H1 (cell line): ENCODE measurements at regions of chr17 and their contacts with region 1.

Region 1: DNA sequence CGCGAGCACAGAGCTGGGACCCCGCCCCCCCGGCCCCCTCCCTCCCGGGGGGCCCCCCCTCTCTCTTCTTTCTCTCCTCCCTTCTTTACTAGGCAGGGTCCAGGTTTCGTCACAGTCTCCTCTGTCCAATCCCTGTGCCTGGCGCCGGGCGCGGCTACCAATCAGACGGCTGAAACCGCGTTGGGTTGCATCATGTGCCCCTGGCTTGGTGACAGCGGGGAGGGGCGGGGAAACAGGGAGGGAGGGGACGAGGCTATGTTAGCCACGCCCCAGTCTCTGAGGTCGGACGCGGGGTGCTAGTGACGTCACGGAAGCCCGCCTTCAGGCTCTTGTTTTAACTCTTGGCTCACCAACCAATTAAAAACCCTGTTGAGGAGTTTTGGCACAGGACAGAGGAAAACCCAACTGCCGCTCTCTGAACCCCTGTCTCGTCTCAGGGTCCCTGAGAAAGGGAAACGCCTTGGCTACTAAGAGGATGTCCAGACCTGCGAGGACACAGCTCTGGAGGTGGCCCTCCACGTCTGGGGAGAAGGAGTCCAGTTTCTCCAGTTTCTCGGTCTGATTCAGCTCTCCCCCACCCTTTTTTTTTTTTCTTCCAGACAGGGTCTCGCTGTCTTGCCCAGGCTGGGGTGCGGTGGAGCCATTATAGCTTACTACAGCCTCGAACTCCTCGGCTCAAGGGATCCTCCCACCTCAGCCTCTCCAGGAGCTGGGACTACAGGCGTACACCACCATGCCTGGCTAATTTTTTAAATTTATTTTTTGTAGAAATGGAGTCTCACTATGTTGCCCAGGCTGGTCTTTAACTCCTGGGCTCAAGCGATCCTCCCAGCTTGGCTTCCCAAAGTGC is 439 bp upstream of the PLEKHH3 start:
- DNase-seq: peak; percentile 96 to 98
- H3K4me3 ChIP-seq: peak overlapping the region in 3 of 4 experiments; percentile 77 to 82 (median 81); a peak in 7 of 8 replicates
- H3K27ac ChIP-seq: peak overlapping the region; percentile 58
- H3K4me1 ChIP-seq: peaks cover 0 to 50% (median 35%) of the 10 kb centered on the region in 4 experiments; a peak in 6 of 7 replicates
- H3K27me3 ChIP-seq: peaks cover 0 to 40% (median 28%) of the 10 kb centered on the region in 4 experiments; a peak in 6 of 7 replicates
- CTCF ChIP-seq: no peak
- EP300 ChIP-seq: no peak
- POLR2A ChIP-seq: no peak; a peak in 1 of 3 replicates
- RAD21 ChIP-seq: no peak

Region 2: GRCh38 chr17:42554250-42555121 is 122.7 kb before region 1 on chr17:
- CTCF ChIA-PET with region 1: interaction called, 3 read pairs
- POLR2A ChIA-PET with region 1: interaction called, 10 read pairs
- DNase-seq: peak in 1 of 2 experiments; percentile 95
- H3K4me3 ChIP-seq: peak overlapping the region; percentile 61 to 84 (median 71)
- H3K27ac ChIP-seq: peak overlapping the region; percentile 53; the same call in 1 of the 2 replicates
- H3K4me1 ChIP-seq: peaks cover 0 to 9% (median 6%) of the 10 kb centered on the region in 4 experiments; a peak in 6 of 7 replicates
- H3K27me3 ChIP-seq: no peaks in the 10 kb centered on the region; a peak in 1 of 7 replicates
- CTCF ChIP-seq: no peak
- EP300 ChIP-seq: no peak
- POLR2A ChIP-seq: peak in 1 of 2 experiments; percentile 70; a peak in 2 of 3 replicates
- RAD21 ChIP-seq: no peak

Region 3: GRCh38 chr17:42566883-42567573 is 110.2 kb before region 1 on chr17 and contains the start of gene MLX:
- CTCF ChIA-PET with region 1: interaction called, 4 read pairs
- POLR2A ChIA-PET with region 1: interaction called, 18 read pairs
- DNase-seq: peak; percentile 79 to 99
- H3K4me3 ChIP-seq: peak within 1 kb of the TSS; percentile 44 to 81 (median 74)
- H3K27ac ChIP-seq: peak within 1 kb of the TSS; percentile 63
- H3K4me1 ChIP-seq: peaks cover 0 to 21% (median 9%) of the 10 kb centered on the region in 4 experiments; a peak in 5 of 7 replicates
- H3K27me3 ChIP-seq: no peaks in the 10 kb centered on the region
- CTCF ChIP-seq: no peak
- EP300 ChIP-seq: no peak
- POLR2A ChIP-seq: peak in 1 of 2 experiments; percentile 11; a peak in 1 of 3 replicates
- RAD21 ChIP-seq: no peak
- total RNA-seq, gene MLX: 27.5 and 34.2 TPM in 2 replicates

Region 4: GRCh38 chr17:42609182-42609813 is 67.9 kb before region 1 on chr17 and contains the starts of genes RETREG3 and TUBG1:
- CTCF ChIA-PET with region 1: interaction called, 10 read pairs
- POLR2A ChIA-PET with region 1: interaction called, 5 read pairs
- DNase-seq: peak; percentile 97 to 98
- H3K4me3 ChIP-seq: peak within 1 kb of the TSS; percentile 73 to 98 (median 91)
- H3K27ac ChIP-seq: peak within 1 kb of the TSS; percentile 46; the same call in 1 of the 2 replicates
- H3K4me1 ChIP-seq: peaks cover 0 to 4% (median 2%) of the 10 kb centered on the region in 4 experiments; a peak in 6 of 7 replicates
- H3K27me3 ChIP-seq: no peaks in the 10 kb centered on the region
- CTCF ChIP-seq: peak in 1 of 3 experiments; percentile 12; a peak in 1 of 4 replicates
- EP300 ChIP-seq: no peak
- POLR2A ChIP-seq: peak; percentile 66 to 77
- RAD21 ChIP-seq: peak in 1 of 2 experiments; percentile 31; a peak in 2 of 4 replicates
- total RNA-seq, gene RETREG3: 39.6 and 42.6 TPM in 2 replicates
- total RNA-seq, gene TUBG1: 107 and 109 TPM in 2 replicates

Region 5: DNA sequence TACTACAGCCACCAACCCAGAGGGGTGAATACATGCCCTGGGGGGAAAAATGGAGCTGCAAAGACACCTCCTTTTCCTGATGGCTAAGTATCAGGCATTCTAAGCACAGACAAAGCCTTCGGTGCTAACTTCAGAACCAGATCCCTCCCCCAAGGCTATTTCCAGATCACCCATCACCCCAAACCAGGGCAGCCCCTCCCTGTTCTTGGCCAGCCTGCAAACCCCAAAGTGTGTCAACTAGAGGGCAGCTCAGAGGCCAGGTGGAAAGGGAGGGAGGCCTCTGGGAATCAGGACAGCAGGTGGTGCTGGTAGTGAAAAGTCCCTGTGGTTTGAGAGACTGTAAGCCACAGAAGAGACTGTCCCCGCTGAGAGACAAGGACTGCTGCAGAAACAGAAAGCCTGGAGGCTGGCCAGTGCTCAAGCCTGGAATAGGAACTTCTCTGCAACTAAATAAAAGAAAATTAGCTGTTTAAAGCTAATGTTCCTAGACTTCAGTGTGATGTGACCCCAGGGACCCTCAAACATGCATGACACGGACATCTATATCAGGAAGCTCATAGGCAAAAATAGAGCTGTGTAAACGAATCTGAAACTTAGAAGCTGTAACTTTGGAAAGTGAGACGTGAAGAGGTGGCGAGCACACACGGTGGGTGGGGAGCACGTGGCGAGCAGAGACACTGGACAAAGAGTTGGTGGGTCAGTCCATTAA is 58.6 kb before region 1 on chr17:
- CTCF ChIA-PET with region 1: interaction called, 37 read pairs
- POLR2A ChIA-PET with region 1: interaction called, 4 read pairs
- DNase-seq: peak in 1 of 2 experiments; percentile 77
- H3K4me3 ChIP-seq: no peak overlapping the region
- H3K27ac ChIP-seq: no peak overlapping the region
- H3K4me1 ChIP-seq: peaks cover 0 to 4% (median 4%) of the 10 kb centered on the region in 4 experiments; a peak in 3 of 7 replicates
- H3K27me3 ChIP-seq: no peaks in the 10 kb centered on the region
- CTCF ChIP-seq: peak; percentile 54 to 83 (median 79)
- EP300 ChIP-seq: no peak
- POLR2A ChIP-seq: no peak
- RAD21 ChIP-seq: peak; percentile 60 to 71

Region 6: DNA sequence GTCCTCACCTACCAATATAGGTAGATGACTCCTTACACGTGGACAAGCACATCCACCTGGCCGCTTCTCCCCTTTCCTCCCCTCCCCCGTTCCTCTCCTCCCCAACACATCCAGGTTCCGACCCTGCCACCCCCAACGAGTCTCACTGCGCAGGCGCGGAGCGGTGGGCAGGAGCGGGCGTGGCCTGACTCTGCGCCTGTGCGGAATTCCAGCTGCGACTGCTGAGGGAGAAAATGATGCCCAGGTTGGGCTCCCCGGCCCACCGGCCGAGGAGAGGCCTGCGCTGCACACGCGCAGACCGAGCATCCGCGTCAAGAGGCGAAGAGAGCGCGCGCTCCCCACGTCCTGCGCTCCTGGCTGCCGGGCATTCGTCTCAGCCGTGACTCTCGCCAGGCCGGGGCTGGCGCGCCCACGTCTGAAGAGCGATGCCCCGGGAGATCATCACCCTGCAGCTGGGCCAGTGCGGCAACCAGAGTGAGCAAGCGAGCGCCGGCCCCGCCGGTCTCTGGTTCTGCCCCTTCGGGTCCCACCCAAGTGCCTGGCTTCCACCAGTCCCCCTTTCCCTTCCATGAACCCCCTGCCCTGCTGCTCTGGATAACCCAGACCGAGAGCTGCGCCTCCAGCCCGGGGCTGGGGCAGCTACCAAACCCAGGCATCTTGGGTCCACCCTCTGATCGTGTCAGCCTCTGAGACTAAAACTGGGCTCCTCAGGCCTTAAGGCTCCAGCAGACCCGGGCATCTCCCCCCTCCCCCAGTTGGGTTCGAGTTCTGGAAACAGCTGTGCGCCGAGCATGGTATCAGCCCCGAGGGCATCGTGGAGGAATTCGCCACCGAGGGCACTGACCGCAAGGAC is 17.9 kb before region 1 on chr17 and contains the start of gene TUBG2:
- CTCF ChIA-PET with region 1: interaction called, 40 read pairs
- POLR2A ChIA-PET with region 1: interaction called, 239 read pairs
- DNase-seq: peak; percentile 89 to 98
- H3K4me3 ChIP-seq: peak within 1 kb of the TSS; percentile 66 to 84 (median 80)
- H3K27ac ChIP-seq: peak within 1 kb of the TSS; percentile 55; the same call in 1 of the 2 replicates
- H3K4me1 ChIP-seq: peaks cover 3 to 11% (median 6%) of the 10 kb centered on the region in 4 experiments; a peak in 5 of 7 replicates
- H3K27me3 ChIP-seq: no peaks in the 10 kb centered on the region
- CTCF ChIP-seq: no peak
- EP300 ChIP-seq: no peak
- POLR2A ChIP-seq: peak in 1 of 2 experiments; percentile 67; a peak in 1 of 3 replicates
- RAD21 ChIP-seq: no peak
- total RNA-seq, gene TUBG2: 13.0 and 14.8 TPM in 2 replicates